ENCODE measurements at regions of chr2 and their contacts with region 1.

Region 1: GRCh38 chr2:157327621-157328500 is 2.2 kb upstream of the ERMN start:
- DNase-seq: peak; percentile 91
- H3K4me3 Mint-ChIP-seq: peak overlapping the region; percentile 28
- H3K27ac Mint-ChIP-seq: no peak overlapping the region
- H3K4me1 Mint-ChIP-seq: peaks cover 46% of the 10 kb centered on the region
- H3K27me3 Mint-ChIP-seq: no peaks in the 10 kb centered on the region

Region 2: GRCh38 chr2:157312866-157313486 is 14.9 kb before region 1 on chr2:
- CTCF ChIA-PET with region 1: interaction called, 316 read pairs
- POLR2A ChIA-PET with region 1: no interaction called
- intact Hi-C with region 1: loop called (anchors 2 kb)
- DNase-seq: no peak
- H3K4me3 Mint-ChIP-seq: no peak overlapping the region
- H3K27ac Mint-ChIP-seq: no peak overlapping the region
- H3K4me1 Mint-ChIP-seq: peaks cover 34% of the 10 kb centered on the region
- H3K27me3 Mint-ChIP-seq: peaks cover 2% of the 10 kb centered on the region

Region 3: DNA sequence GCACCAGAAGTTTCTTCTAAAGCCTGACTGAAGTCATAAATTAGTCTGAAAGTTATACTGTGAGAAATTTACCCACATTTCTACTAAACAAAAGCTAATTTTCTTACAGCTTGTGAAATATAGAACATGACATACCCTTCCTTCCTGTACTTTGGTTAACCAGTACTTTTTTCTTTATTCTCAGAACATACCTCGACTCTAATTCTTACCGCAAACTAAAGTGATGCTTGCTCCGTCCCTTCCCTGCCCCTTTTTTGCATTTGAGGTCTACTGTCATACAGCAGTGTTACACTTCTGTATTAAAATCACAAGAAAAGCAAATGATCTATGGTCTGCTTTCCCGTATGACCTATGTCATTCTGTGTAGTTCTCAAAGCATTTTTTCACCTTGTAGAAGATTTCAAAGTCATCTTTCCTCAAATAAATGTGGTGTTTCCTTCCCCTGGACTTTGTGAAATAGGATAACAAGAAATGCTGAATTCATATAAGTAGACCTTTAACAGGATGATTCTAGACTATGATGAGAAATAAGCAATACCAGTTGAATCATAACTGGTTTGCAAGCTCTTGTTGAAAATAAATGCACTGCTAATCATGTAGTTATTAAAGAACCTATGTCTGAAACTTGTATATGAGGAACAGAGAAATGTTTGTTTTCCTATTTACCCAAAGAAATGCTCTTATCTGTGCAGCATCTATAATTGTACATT is 85.6 kb after region 1 on chr2:
- CTCF ChIA-PET with region 1: interaction called, 45 read pairs
- POLR2A ChIA-PET with region 1: interaction called, 15 read pairs
- intact Hi-C with region 1: loop called (anchors 1 kb)
- DNase-seq: peak; percentile 75
- H3K4me3 Mint-ChIP-seq: peak overlapping the region; percentile 65
- H3K27ac Mint-ChIP-seq: peak overlapping the region; percentile 98
- H3K4me1 Mint-ChIP-seq: peaks cover 81% of the 10 kb centered on the region
- H3K27me3 Mint-ChIP-seq: peaks cover 2% of the 10 kb centered on the region

Region 4: DNA sequence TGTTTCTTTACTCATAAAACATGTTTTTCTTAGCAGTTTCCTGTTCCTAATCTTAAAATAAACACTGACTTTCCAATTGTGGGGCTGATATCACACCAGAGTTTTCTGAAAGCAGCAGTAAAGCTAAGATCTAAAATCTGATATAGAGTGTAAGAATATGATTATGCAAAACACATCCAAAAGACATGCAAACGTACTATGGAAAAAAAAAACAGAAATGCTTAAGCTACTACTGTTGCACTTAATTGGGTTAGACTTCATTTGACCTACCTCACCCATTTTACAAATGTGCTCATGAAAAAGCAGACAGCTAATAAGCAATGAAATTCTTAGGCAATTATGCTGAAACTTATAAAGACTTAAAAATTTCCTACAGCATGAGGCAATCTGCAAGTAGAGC is 105.5 kb after region 1 on chr2:
- CTCF ChIA-PET with region 1: interaction called, 50 read pairs
- POLR2A ChIA-PET with region 1: interaction called, 8 read pairs
- intact Hi-C with region 1: no loop called
- DNase-seq: no peak
- H3K4me3 Mint-ChIP-seq: peak overlapping the region; percentile 92
- H3K27ac Mint-ChIP-seq: peak overlapping the region; percentile 99
- H3K4me1 Mint-ChIP-seq: peaks cover 69% of the 10 kb centered on the region
- H3K27me3 Mint-ChIP-seq: no peaks in the 10 kb centered on the region

Region 5: GRCh38 chr2:157460384-157460837 is 132.6 kb after region 1 on chr2:
- CTCF ChIA-PET with region 1: interaction called, 26 read pairs
- POLR2A ChIA-PET with region 1: interaction called, 3 read pairs
- intact Hi-C with region 1: loop called (anchors 1 kb)
- DNase-seq: no peak
- H3K4me3 Mint-ChIP-seq: peak overlapping the region; percentile 1
- H3K27ac Mint-ChIP-seq: peak overlapping the region; percentile 35
- H3K4me1 Mint-ChIP-seq: peaks cover 84% of the 10 kb centered on the region
- H3K27me3 Mint-ChIP-seq: no peaks in the 10 kb centered on the region

Region 6: DNA sequence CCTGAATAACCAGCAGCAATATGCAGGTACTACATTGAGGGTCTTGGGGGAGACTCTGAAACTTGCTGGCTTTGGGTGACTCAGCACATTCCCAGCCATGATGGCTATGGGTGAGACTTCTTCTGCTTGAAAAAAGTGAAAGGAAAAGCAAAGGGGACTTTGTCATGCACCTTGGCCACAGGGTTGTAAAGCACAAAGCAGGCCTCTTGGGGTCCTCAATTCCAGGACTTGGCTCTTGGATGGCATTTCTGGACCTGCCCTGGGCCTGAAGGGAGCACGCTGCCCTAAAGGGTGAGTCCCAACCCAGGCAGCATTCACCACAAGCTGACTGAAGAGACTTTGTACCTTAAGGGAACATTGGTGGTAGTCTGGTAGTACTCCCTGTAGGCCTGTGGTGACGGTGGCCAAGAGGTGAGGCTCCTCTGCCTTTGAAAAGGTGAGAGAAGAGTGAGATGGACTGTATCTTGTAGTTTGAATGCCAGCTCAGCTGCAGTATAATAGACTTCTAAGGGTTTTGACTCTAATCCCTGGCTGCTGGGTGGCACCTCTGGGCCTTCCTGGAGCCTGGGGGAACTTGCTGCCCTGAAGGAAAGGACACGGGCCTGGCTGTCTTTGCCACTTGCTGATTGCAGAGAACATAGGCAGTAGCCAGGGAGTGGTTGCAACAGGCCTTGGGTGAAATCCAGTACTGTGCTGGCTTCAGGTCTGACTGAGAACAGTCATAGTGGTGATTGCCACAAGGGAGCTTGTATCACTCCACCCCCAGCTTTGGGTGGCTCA is 152.5 kb after region 1 on chr2:
- CTCF ChIA-PET with region 1: interaction called, 16 read pairs
- POLR2A ChIA-PET with region 1: no interaction called
- intact Hi-C with region 1: loop called (anchors 2 kb)
- DNase-seq: peak; percentile 82
- H3K4me3 Mint-ChIP-seq: peak overlapping the region; percentile 54
- H3K27ac Mint-ChIP-seq: peak overlapping the region; percentile 95
- H3K4me1 Mint-ChIP-seq: peaks cover 68% of the 10 kb centered on the region
- H3K27me3 Mint-ChIP-seq: no peaks in the 10 kb centered on the region

Region 7: GRCh38 chr2:157497638-157498314 is 169.9 kb after region 1 on chr2:
- CTCF ChIA-PET with region 1: interaction called, 57 read pairs
- POLR2A ChIA-PET with region 1: no interaction called
- intact Hi-C with region 1: no loop called
- DNase-seq: no peak
- H3K4me3 Mint-ChIP-seq: no peak overlapping the region
- H3K27ac Mint-ChIP-seq: no peak overlapping the region
- H3K4me1 Mint-ChIP-seq: peaks cover 9% of the 10 kb centered on the region
- H3K27me3 Mint-ChIP-seq: no peaks in the 10 kb centered on the region